Common myeloid progenitor, CD34-positive (primary cell): ENCODE measurements at regions of chr4 and their contacts with region 1.

Region 1: DNA sequence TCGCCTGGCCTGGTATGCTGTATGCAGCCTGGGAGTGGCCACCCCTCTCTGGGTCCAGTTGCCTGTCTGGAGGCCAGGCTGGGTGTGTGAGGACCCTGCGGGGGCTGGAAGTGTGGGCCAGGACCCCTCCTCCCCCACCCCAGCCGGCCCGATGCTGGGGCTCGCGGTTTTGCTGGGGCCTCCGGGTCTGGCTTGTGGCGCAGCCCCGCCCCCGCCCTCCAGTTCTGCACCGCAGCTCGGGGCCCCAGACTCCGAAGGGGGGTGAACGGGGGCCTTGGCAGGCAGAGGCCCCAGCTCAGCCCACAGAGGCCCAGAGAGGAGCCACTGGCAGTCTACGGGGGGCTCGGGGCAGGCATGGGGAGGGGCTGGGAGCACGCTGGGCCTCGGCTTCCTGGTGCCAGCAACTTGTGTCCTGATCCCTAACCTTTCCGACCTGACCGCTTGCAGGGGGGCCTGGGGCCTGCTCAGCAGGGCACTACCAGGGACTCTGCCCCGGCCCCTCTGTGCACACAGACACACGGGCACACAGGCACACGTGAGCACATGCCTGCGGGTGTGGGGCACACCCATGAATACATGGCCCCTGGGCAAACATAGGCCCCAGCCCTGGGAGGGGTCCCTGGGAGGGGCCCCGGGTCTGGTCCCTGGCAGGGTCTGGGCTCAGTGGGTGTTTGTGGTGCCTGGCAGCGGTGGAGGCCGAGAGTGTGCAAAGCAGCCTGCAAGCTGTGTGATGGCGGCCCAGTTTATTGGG is 21.4 kb upstream of the FGFR3 start:
- DNase-seq: peak in 2 of 3 donors; percentile 81 to 86
- H3K4me3 ChIP-seq: peak overlapping the region in 3 of 7 experiments; percentile 25 to 26 (median 25)
- H3K27ac ChIP-seq: no peak overlapping the region
- H3K4me1 ChIP-seq: peaks cover 0 to 70% (median 65%) of the 10 kb centered on the region in 4 experiments
- H3K27me3 ChIP-seq: peaks cover 0 to 9% (median 0%) of the 10 kb centered on the region in 5 experiments

Region 2: DNA sequence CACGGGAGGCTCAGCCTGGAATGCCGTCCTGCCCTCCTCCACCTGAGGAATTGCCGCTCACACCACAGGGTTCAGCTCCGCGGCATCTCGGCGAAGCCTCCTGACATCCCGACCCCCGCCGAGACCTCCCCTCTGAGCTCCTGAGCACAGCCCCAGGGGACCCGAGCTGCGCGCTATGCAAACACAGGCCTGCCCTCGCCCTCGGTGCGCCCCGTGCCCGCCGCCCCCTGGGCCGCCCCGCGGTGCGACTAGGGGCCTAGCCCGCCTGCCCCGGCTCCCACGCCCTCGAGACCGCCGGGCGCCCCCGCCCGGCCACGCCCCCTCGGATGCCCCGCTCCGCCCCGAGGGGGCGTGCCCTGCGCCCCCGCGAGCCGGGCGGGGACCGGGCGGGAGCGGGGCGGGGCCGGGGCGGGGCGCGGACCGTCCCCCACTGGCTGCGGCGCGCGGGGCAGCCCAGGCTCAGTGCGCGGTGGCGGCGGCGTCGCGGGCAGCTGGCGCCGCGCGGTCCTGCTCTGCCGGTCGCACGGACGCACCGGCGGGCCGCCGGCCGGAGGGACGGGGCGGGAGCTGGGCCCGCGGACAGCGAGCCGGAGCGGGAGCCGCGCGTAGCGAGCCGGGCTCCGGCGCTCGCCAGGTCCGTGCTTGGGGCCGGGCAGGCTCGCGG is 21.2 kb after region 1 on chr4 and contains the start of gene FGFR3:
- CTCF ChIA-PET with region 1: interaction called, 16 read pairs
- POLR2A ChIA-PET with region 1: interaction called, 3 read pairs
- DNase-seq: peak in 2 of 3 donors; percentile 54 to 61
- H3K4me3 ChIP-seq: peak within 1 kb of the TSS; percentile 12 to 71 (median 54)
- H3K27ac ChIP-seq: no peak within 1 kb of the TSS
- H3K4me1 ChIP-seq: peaks cover 0 to 24% (median 20%) of the 10 kb centered on the region in 4 experiments
- H3K27me3 ChIP-seq: peaks cover 0 to 48% (median 14%) of the 10 kb centered on the region in 5 experiments

Region 3: GRCh38 chr4:2163311-2163821 is 391.6 kb after region 1 on chr4:
- CTCF ChIA-PET with region 1: no interaction called
- POLR2A ChIA-PET with region 1: no interaction called
- DNase-seq: no peak
- H3K4me3 ChIP-seq: no peak overlapping the region
- H3K27ac ChIP-seq: no peak overlapping the region
- H3K4me1 ChIP-seq: no peaks in the 10 kb centered on the region
- H3K27me3 ChIP-seq: no peaks in the 10 kb centered on the region